WTC11 (cell line): ENCODE measurements at regions of chr6 and their contacts with region 1.

Region 1: GRCh38 chr6:38493931-38494547 is 145.7 kb downstream of the BTBD9 start:
- DNase-seq: peak; percentile 84
- ATAC-seq: no peak
- H3K4me3 Mint-ChIP-seq: no peak overlapping the region
- H3K27ac Mint-ChIP-seq: no peak overlapping the region
- H3K4me1 Mint-ChIP-seq: peaks cover 7% of the 10 kb centered on the region
- H3K27me3 Mint-ChIP-seq: no peaks in the 10 kb centered on the region
- CTCF ChIP-seq: peak; percentile 96

Region 2: GRCh38 chr6:38034274-38034914 is 459.6 kb before region 1 on chr6:
- CTCF ChIA-PET with region 1: interaction called, 13 read pairs
- POLR2A ChIA-PET with region 1: no interaction called
- DNase-seq: no peak
- ATAC-seq: no peak
- H3K4me3 Mint-ChIP-seq: no peak overlapping the region
- H3K27ac Mint-ChIP-seq: no peak overlapping the region
- H3K4me1 Mint-ChIP-seq: peaks cover 44% of the 10 kb centered on the region
- H3K27me3 Mint-ChIP-seq: no peaks in the 10 kb centered on the region
- CTCF ChIP-seq: no peak

Region 3: GRCh38 chr6:38193481-38194281 is 300.4 kb before region 1 on chr6:
- CTCF ChIA-PET with region 1: interaction called, 13 read pairs
- POLR2A ChIA-PET with region 1: no interaction called
- DNase-seq: no peak
- ATAC-seq: no peak
- H3K4me3 Mint-ChIP-seq: no peak overlapping the region
- H3K27ac Mint-ChIP-seq: no peak overlapping the region; the same call in 1 of the 2 replicates
- H3K4me1 Mint-ChIP-seq: peaks cover 35% of the 10 kb centered on the region
- H3K27me3 Mint-ChIP-seq: no peaks in the 10 kb centered on the region; the same call in 1 of the 2 replicates
- CTCF ChIP-seq: no peak

Region 4: DNA sequence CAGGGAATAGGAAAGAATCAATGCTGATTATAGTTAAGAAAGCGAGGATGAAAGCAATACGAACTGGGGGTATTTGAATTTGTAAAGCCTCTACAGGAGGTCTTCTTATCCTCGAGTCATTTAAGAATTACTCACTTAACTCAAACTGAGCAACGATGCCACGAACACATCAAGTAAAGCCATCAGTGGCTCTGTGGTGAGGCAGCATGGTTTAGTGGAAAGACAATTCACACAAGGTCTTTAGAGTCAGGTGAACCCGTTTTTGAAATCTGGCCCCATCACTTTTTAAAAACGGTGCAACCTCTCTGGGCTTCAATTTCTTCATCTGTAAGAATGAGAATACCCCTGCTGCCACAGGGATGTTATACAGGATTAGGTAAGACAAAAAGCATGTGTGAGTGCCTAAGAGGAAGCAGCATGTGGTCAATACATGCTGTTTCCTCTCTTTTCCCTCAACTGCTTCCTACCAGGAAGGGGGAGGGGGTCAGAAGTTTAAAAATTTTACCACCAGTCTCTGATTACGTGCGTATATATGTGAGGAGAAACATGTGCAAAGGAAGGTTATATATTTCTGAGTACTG is 16.3 kb before region 1 on chr6:
- CTCF ChIA-PET with region 1: interaction called, 11 read pairs
- POLR2A ChIA-PET with region 1: no interaction called
- DNase-seq: no peak
- ATAC-seq: peak; percentile 86
- H3K4me3 Mint-ChIP-seq: peak overlapping the region; percentile 26
- H3K27ac Mint-ChIP-seq: no peak overlapping the region
- H3K4me1 Mint-ChIP-seq: peaks cover 41% of the 10 kb centered on the region
- H3K27me3 Mint-ChIP-seq: no peaks in the 10 kb centered on the region
- CTCF ChIP-seq: no peak

Region 5: DNA sequence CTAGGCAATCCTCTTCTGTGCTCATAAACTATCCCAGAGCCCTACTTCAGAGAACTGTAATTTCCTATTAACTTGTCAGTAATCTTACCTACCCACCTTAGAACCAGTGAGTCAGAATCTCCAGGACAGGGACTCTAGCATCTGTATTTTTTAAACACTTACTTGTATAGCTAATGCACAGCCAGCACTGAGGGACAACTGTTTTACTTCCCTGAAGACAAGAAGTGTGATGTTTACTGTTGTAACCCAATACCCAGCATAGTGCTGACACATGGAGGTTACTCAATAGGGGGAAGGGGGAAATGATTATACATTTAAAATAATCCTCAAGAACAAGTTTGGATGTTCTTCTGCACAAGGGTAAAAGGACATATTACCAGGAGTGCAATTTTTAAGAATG is 14.9 kb after region 1 on chr6:
- CTCF ChIA-PET with region 1: interaction called, 13 read pairs
- POLR2A ChIA-PET with region 1: no interaction called
- DNase-seq: no peak
- ATAC-seq: peak; percentile 59
- H3K4me3 Mint-ChIP-seq: no peak overlapping the region
- H3K27ac Mint-ChIP-seq: no peak overlapping the region
- H3K4me1 Mint-ChIP-seq: no peaks in the 10 kb centered on the region; the same call in 1 of the 2 replicates
- H3K27me3 Mint-ChIP-seq: no peaks in the 10 kb centered on the region
- CTCF ChIP-seq: no peak

Region 6: GRCh38 chr6:38542031-38542430 is 48.0 kb after region 1 on chr6:
- CTCF ChIA-PET with region 1: no interaction called
- POLR2A ChIA-PET with region 1: no interaction called
- DNase-seq: no peak
- ATAC-seq: no peak
- H3K4me3 Mint-ChIP-seq: no peak overlapping the region
- H3K27ac Mint-ChIP-seq: no peak overlapping the region
- H3K4me1 Mint-ChIP-seq: no peaks in the 10 kb centered on the region
- H3K27me3 Mint-ChIP-seq: no peaks in the 10 kb centered on the region
- CTCF ChIP-seq: no peak

Region 7: DNA sequence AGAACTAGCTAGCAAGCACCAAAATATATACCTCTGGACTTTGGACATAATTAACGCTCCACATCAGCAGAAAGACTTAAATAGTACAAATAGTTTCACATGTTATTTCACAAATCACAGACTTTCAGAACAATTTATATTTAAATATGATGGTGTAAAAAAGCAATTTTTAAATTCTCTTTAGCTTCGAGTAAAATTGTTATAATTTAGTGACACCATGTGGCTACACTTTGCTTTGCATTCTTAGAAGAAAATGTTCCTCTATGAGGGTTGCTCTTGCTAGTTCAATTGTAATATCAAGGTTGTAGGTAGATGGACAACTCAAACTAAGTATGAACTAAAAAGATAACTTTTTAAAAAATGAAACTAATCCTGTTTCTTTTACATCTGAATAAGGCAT is 76.7 kb after region 1 on chr6:
- CTCF ChIA-PET with region 1: interaction called, 25 read pairs
- POLR2A ChIA-PET with region 1: interaction called, 3 read pairs
- DNase-seq: no peak
- ATAC-seq: no peak; the same call in 1 of the 2 replicates
- H3K4me3 Mint-ChIP-seq: no peak overlapping the region
- H3K27ac Mint-ChIP-seq: no peak overlapping the region
- H3K4me1 Mint-ChIP-seq: peaks cover 21% of the 10 kb centered on the region
- H3K27me3 Mint-ChIP-seq: peaks cover 7% of the 10 kb centered on the region
- CTCF ChIP-seq: no peak